HEK293T (cell line): ENCODE measurements at regions of chrX and their contacts with region 1.

Region 1: GRCh38 chrX:16882702-16883486 is 12.7 kb upstream of the RBBP7 start:
- DNase-seq: peak; percentile 73

Region 2: GRCh38 chrX:16855363-16856075 is 27.4 kb before region 1 on chrX:
- CTCF ChIA-PET with region 1: no interaction called
- POLR2A ChIA-PET with region 1: no interaction called
- DNase-seq: no peak

Region 3: GRCh38 chrX:16870095-16870860 is 12.6 kb before region 1 on chrX and contains the start of gene RBBP7:
- CTCF ChIA-PET with region 1: interaction called, 41 read pairs
- POLR2A ChIA-PET with region 1: interaction called, 25 read pairs
- DNase-seq: peak; percentile 95

Region 4: GRCh38 chrX:17046478-17047097 is 163.7 kb after region 1 on chrX:
- CTCF ChIA-PET with region 1: interaction called, 28 read pairs
- POLR2A ChIA-PET with region 1: interaction called, 8 read pairs
- DNase-seq: peak; percentile 67